Panc1 (cell line): ENCODE measurements at regions of chr18 and their contacts with region 1.

Region 1: DNA sequence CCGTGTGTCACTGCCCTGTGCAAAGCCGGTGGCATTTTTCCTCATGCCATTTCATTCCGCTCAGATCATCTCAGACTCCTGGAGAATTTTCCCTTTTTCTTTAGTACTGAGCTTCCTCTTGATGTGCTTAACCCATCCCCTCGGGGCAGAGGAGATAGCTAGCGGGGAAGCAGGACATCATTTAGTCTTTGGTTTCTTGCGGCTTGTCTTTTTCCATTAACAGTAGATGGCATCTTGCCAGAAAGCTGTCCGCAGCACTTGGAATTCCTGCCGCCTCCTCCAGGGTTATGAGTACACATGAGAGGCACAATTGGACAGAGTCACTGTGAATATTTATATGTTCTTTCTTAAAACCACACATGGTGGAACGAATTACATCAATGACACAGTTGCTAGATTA is 226.6 kb downstream of the ALPK2 start:
- DNase-seq: no peak
- ATAC-seq: no peak
- H3K4me3 ChIP-seq: no peak overlapping the region
- H3K27ac ChIP-seq: no peak overlapping the region
- H3K4me1 ChIP-seq: no peaks in the 10 kb centered on the region
- H3K27me3 ChIP-seq: no peaks in the 10 kb centered on the region
- CTCF ChIP-seq: no peak

Region 2: DNA sequence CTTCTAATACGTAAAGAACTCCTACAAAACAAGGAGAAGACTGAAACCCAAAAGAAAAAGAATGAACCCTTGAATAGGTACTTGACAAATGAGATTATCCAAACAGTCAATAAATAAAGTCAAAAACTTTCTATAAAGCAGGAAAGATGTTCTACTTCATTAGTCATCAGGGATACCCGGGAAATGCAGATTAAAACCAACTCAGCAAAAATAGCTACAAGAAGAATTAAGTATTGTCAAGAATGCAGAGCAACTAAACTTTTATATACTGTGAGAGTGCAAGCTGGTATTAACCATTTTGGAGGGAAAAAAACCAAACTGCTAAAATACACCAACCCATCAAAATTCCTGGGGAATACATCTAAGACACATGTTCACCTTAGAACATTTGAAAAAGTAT is 1774.3 kb before region 1 on chr18:
- CTCF ChIA-PET with region 1: no interaction called
- POLR2A ChIA-PET with region 1: interaction called, 14 read pairs
- in situ Hi-C with region 1: no loop called
- intact Hi-C with region 1: no loop called
- DNase-seq: no peak
- ATAC-seq: no peak
- H3K4me3 ChIP-seq: no peak overlapping the region
- H3K27ac ChIP-seq: no peak overlapping the region
- H3K4me1 ChIP-seq: no peaks in the 10 kb centered on the region
- H3K27me3 ChIP-seq: no peaks in the 10 kb centered on the region
- CTCF ChIP-seq: no peak

Region 3: DNA sequence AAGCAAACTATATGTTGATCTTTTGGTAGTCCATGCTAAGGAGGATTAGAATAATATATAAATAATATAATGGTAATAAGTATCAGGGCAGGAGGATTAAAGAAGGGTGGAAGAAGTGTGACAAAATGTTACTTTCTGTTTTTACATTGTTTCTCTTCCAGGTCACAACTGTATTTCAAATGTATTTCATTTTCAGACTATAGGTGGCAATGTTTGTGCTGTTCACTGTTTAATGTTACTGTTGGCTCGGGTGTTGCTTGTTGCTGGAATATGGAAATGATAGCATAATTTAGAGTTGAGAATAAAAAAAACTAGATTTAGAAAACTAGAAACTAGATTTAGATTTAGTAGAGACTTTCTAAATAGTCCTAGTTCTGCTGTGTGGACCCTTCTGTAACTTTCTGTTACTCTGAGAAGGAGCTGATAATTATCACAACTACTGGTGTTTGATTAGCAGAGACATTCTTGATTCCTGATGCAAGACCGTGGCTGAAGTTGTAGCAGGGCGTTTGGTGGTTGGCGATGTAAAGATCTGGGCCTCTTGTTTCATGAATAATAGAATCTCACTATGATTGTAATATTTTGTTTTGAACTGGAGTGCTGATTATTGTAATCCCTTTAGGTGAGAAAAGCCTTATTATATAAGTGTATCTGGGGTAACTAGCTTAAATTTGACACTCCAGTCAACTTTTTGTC is 350.3 kb before region 1 on chr18:
- CTCF ChIA-PET with region 1: no interaction called
- POLR2A ChIA-PET with region 1: no interaction called
- in situ Hi-C with region 1: no loop called
- intact Hi-C with region 1: no loop called
- DNase-seq: no peak
- ATAC-seq: no peak
- H3K4me3 ChIP-seq: no peak overlapping the region
- H3K27ac ChIP-seq: no peak overlapping the region; the same call in 1 of the 2 replicates
- H3K4me1 ChIP-seq: no peaks in the 10 kb centered on the region; the same call in 1 of the 2 replicates
- H3K27me3 ChIP-seq: no peaks in the 10 kb centered on the region
- CTCF ChIP-seq: peak; percentile 28; the same call in 1 of the 2 replicates

Region 4: DNA sequence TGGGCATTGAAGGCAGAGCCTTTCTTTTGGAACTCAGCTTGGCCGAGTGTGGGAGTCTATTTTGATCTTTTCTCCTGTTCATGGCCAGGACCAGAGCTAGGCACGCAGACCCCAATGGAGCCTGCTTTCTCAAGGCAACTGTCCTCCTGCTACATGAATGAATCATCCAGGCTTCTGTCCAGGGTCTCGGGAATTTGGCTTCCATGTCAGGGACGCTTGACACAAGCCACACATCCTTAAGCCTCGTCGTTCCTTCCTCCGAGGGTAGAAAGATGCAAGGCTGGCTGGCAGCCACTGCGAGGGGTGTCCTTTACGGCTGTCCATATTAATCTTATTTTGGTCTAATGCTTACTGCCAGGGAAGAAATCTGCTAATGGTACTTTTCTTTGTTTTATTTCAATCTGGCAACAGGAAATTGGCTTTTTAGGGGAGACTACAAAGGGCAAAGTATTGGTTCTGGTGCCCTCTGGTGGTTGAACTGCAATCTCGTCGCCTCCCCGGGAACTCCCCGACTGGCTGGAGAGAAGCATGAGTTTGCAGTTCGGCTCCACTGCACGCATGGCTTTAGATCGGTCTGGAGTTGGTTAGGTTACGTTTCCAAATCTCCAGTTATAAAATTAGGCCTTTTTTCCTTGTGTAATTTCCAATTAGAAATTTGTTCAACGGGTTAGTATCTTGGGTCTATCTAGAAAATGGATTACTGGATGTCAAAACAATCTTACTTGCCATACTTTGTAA is 91.4 kb after region 1 on chr18:
- CTCF ChIA-PET with region 1: no interaction called
- POLR2A ChIA-PET with region 1: no interaction called
- in situ Hi-C with region 1: no loop called
- intact Hi-C with region 1: loop called (anchors 5 kb)
- DNase-seq: peak; percentile 42
- ATAC-seq: peak; percentile 92
- H3K4me3 ChIP-seq: no peak overlapping the region
- H3K27ac ChIP-seq: no peak overlapping the region
- H3K4me1 ChIP-seq: no peaks in the 10 kb centered on the region
- H3K27me3 ChIP-seq: no peaks in the 10 kb centered on the region
- CTCF ChIP-seq: peak; percentile 74